Gastrocnemius medialis (tissue), 4 donors: ENCODE measurements at regions of chr4 and their contacts with region 1.

Region 1: DNA sequence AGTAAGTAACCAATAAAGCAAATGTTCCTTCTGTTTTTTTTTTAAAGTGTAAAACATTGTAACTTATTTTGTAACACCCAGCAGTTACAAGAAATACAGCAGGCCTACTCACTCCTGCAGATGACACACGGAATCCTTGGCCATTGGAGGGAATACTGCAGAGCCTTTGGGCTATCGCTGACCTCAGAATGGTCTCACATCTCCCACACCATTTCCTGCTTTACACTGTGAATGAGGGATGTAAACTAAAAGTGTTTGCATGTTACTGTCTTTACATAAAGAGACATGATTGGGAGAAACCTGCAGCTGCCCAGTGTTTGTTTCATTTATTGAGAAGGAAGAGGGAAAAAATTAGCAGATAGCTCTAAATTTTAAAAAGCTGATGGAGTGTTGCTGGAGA is 64.1 kb downstream of the USP46 start:
- DNase-seq: no peak
- ATAC-seq: no peak
- H3K4me3 ChIP-seq: no peak overlapping the region
- H3K27ac ChIP-seq: no peak overlapping the region
- H3K4me1 ChIP-seq: no peaks in the 10 kb centered on the region
- H3K27me3 ChIP-seq: no peaks in the 10 kb centered on the region
- CTCF ChIP-seq: no peak
- POLR2A ChIP-seq: no peak

Region 2: GRCh38 chr4:52627876-52628275 is 32.9 kb after region 1 on chr4:
- in situ Hi-C with region 1: no loop called
- intact Hi-C with region 1: loop called (anchors 1 kb)
- DNase-seq: peak in 1 of 2 donors; percentile 15
- ATAC-seq: no peak
- H3K4me3 ChIP-seq: no peak overlapping the region
- H3K27ac ChIP-seq: peak overlapping the region in 1 of 4 donors; percentile 73
- H3K4me1 ChIP-seq: peaks cover 17 to 19% of the 10 kb centered on the region in 2 donors
- H3K27me3 ChIP-seq: no peaks in the 10 kb centered on the region
- CTCF ChIP-seq: no peak
- POLR2A ChIP-seq: no peak

Region 3: GRCh38 chr4:52638717-52639116 is 43.7 kb after region 1 on chr4:
- in situ Hi-C with region 1: no loop called
- intact Hi-C with region 1: no loop called
- DNase-seq: no peak
- ATAC-seq: no peak
- H3K4me3 ChIP-seq: no peak overlapping the region
- H3K27ac ChIP-seq: no peak overlapping the region
- H3K4me1 ChIP-seq: peaks cover 28 to 34% of the 10 kb centered on the region in 2 donors
- H3K27me3 ChIP-seq: no peaks in the 10 kb centered on the region
- CTCF ChIP-seq: no peak
- POLR2A ChIP-seq: no peak